Activated CD8-positive, alpha-beta T cell treated with anti-CD3 and anti-CD28 coated beads for 36 hours (primary cell): ENCODE measurements at regions of chr22 and their contacts with region 1.

Region 1: DNA sequence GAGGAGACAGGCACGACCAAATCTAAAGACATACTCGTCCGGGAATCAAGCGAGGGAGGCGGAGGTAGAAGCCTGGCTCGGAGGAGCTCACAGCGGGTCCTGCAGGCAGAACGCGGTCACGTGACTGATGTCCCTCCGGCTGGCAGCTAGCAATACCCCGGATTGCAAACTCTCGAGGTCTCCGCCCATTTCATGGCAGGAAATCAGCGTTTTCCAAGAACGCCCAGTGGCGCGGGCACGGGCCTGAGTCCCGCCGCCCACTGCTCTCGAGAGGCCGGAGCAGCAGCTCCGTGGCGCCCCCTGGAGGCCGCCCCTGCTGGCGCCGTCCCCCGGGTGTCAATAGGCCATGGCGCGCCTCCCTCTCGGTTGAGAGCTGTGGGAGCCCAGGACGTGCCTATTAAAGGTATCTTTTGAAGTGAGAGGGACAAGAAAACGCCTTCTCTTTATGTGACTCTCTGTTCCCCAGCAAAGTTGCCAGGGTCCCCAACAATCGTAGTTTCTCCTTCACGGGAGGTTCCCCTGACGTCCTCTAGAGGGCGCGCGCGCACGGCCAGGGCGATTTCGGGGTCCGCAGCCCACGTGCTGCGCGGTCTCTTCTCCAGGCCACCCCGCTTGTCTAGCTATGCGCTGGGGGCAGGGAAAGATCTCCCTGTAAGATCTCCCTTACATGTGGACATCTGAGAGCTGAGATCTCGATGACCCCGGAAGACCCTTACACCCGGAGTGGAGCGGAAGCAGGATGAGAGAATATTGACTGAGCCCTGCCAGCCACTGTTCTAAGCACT is 37.3 kb upstream of the RBFOX2 start:
- DNase-seq: peak; percentile 85
- ATAC-seq: peak; percentile 89
- H3K4me3 Mint-ChIP-seq: peak overlapping the region; percentile 67
- H3K27ac Mint-ChIP-seq: peak overlapping the region; percentile 89
- H3K4me1 Mint-ChIP-seq: peaks cover 8% of the 10 kb centered on the region
- H3K27me3 Mint-ChIP-seq: peaks cover 1% of the 10 kb centered on the region
- CTCF ChIP-seq: peak; percentile 100

Region 2: DNA sequence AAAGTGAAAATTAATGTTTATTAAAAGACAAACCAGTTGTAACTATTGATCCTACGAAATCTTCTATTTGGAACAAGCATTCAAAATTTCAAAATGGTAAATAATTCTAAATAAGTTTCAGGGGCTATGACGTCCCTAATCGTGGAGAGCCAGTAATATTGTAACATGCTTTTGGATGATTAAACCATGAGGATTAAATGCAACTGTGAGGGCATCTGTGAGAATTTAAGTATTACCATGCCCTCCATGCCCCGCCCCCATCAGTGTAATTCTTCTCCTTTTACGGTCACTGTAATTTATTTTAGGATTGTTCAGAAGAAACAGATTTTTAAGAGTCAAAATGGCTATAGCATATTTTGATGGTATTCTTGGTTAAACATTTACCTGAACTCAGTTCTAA is 215.1 kb before region 1 on chr22:
- CTCF ChIA-PET with region 1: no interaction called
- POLR2A ChIA-PET with region 1: no interaction called
- intact Hi-C with region 1: no loop called
- DNase-seq: no peak
- ATAC-seq: no peak
- H3K4me3 Mint-ChIP-seq: no peak overlapping the region
- H3K27ac Mint-ChIP-seq: no peak overlapping the region
- H3K4me1 Mint-ChIP-seq: no peaks in the 10 kb centered on the region
- H3K27me3 Mint-ChIP-seq: no peaks in the 10 kb centered on the region
- CTCF ChIP-seq: no peak

Region 3: GRCh38 chr22:35868938-35869337 is 197.0 kb before region 1 on chr22:
- CTCF ChIA-PET with region 1: no interaction called
- POLR2A ChIA-PET with region 1: no interaction called
- intact Hi-C with region 1: no loop called
- DNase-seq: no peak
- ATAC-seq: no peak
- H3K4me3 Mint-ChIP-seq: no peak overlapping the region
- H3K27ac Mint-ChIP-seq: no peak overlapping the region
- H3K4me1 Mint-ChIP-seq: no peaks in the 10 kb centered on the region
- H3K27me3 Mint-ChIP-seq: peaks cover 2% of the 10 kb centered on the region
- CTCF ChIP-seq: no peak

Region 4: GRCh38 chr22:35938226-35938625 is 127.7 kb before region 1 on chr22:
- CTCF ChIA-PET with region 1: interaction called, 13 read pairs
- POLR2A ChIA-PET with region 1: interaction called, 3 read pairs
- intact Hi-C with region 1: no loop called
- DNase-seq: no peak
- ATAC-seq: no peak
- H3K4me3 Mint-ChIP-seq: no peak overlapping the region
- H3K27ac Mint-ChIP-seq: no peak overlapping the region
- H3K4me1 Mint-ChIP-seq: no peaks in the 10 kb centered on the region
- H3K27me3 Mint-ChIP-seq: peaks cover 3% of the 10 kb centered on the region
- CTCF ChIP-seq: no peak

Region 5: DNA sequence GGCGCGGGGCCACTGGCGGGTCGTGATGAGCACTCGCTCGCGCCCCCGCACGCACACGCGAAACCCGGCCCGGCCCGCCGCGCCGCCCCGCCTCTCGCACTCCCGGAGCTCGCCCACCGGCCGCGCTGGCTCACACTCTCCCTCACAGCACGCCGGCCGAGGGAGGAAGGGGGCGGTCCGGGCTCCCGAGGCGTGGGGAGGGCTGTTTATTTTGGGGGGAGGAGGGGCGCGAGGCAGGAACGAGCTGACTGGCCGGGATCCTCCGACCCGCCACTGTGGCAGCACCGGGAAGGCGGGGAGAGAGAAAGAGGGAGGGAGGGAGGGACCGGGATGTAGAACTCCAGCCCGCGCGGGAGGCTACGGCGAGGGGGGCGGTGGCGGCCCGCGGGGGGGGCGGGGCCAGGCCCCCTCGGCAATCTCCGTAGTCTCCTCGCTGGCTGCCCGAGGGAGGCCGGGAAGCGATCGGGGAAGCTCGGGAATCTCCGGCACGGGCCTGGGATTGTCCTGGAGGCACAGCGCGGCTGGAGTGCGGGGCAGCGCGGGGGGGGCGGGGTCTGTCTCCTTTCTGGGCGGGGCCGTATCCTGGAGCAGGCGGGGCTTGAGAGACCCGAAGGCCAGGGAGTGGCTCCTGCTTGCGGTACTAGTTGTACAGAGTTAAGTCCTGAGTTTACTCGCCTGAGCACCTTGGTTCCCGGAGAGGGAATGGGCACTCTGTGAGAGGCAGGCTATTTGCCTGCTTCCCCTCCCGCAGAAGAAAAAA is 37.1 kb before region 1 on chr22 and contains the start of gene RBFOX2:
- CTCF ChIA-PET with region 1: interaction called, 38 read pairs
- POLR2A ChIA-PET with region 1: no interaction called
- intact Hi-C with region 1: no loop called
- DNase-seq: peak; percentile 79
- ATAC-seq: peak; percentile 85
- H3K4me3 Mint-ChIP-seq: peak within 1 kb of the TSS; percentile 85
- H3K27ac Mint-ChIP-seq: peak within 1 kb of the TSS; percentile 53
- H3K4me1 Mint-ChIP-seq: peaks cover 14% of the 10 kb centered on the region
- H3K27me3 Mint-ChIP-seq: peaks cover 11% of the 10 kb centered on the region
- CTCF ChIP-seq: no peak
- total RNA-seq, gene RBFOX2: 3.1 to 3.3 TPM

Region 6: GRCh38 chr22:36081023-36081431 is 15.1 kb after region 1 on chr22:
- CTCF ChIA-PET with region 1: interaction called, 94 read pairs
- POLR2A ChIA-PET with region 1: no interaction called
- intact Hi-C with region 1: no loop called
- DNase-seq: no peak
- ATAC-seq: no peak
- H3K4me3 Mint-ChIP-seq: no peak overlapping the region
- H3K27ac Mint-ChIP-seq: no peak overlapping the region
- H3K4me1 Mint-ChIP-seq: no peaks in the 10 kb centered on the region
- H3K27me3 Mint-ChIP-seq: no peaks in the 10 kb centered on the region
- CTCF ChIP-seq: no peak

Region 7: GRCh38 chr22:36110306-36110881 is 44.4 kb after region 1 on chr22:
- CTCF ChIA-PET with region 1: interaction called, 43 read pairs
- POLR2A ChIA-PET with region 1: no interaction called
- intact Hi-C with region 1: no loop called
- DNase-seq: no peak
- ATAC-seq: no peak
- H3K4me3 Mint-ChIP-seq: no peak overlapping the region
- H3K27ac Mint-ChIP-seq: no peak overlapping the region
- H3K4me1 Mint-ChIP-seq: no peaks in the 10 kb centered on the region
- H3K27me3 Mint-ChIP-seq: peaks cover 5% of the 10 kb centered on the region
- CTCF ChIP-seq: no peak

Region 8: GRCh38 chr22:36151006-36151595 is 85.1 kb after region 1 on chr22:
- CTCF ChIA-PET with region 1: interaction called, 13 read pairs
- POLR2A ChIA-PET with region 1: interaction called, 3 read pairs
- intact Hi-C with region 1: no loop called
- DNase-seq: no peak
- ATAC-seq: no peak
- H3K4me3 Mint-ChIP-seq: no peak overlapping the region
- H3K27ac Mint-ChIP-seq: peak overlapping the region; percentile 74
- H3K4me1 Mint-ChIP-seq: peaks cover 67% of the 10 kb centered on the region
- H3K27me3 Mint-ChIP-seq: no peaks in the 10 kb centered on the region
- CTCF ChIP-seq: no peak

Region 9: DNA sequence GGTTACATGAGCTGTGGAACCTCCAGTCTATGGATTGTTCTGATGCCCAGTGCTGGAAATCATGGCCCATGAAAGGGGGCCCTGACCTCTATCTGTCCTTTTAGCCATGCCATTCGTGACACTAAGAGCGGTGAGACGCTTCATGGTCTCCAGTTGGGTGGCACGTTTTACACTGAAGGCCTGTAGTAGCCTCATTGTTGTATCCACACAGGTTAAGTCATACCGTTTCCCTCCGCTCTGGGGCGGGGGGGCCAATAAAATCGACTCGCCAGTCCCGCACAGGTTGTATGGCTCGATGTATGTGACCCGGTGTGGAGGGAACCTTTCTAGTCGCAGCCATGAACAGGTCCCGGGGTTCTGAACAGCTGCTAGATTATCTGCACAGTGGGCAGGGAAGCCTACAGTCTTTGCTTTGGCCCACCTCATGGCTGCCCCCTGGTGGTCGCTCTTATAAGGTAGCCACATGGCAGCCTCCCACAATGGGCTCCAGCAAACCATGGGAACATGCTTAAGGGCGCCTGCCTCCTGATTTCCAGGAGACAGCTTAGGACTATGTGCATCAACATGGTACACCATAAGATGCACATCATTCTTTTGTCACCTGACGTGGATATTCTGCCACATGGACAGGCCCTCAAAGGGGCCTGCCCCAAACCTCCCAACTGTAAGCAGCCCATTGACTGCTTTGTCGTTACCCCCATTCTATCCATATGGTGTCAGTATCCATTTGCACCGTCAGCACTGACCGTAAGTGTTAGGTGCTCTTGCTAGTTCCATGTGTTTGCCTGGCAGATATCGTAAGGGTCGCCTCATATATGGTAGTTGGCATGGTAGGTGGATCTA is 114.3 kb after region 1 on chr22:
- CTCF ChIA-PET with region 1: interaction called, 19 read pairs
- POLR2A ChIA-PET with region 1: no interaction called
- intact Hi-C with region 1: no loop called
- DNase-seq: peak; percentile 94
- ATAC-seq: peak; percentile 98
- H3K4me3 Mint-ChIP-seq: no peak overlapping the region
- H3K27ac Mint-ChIP-seq: no peak overlapping the region
- H3K4me1 Mint-ChIP-seq: peaks cover 11% of the 10 kb centered on the region
- H3K27me3 Mint-ChIP-seq: no peaks in the 10 kb centered on the region
- CTCF ChIP-seq: peak; percentile 95